Naive thymus-derived CD8-positive, alpha-beta T cell (primary cell): ENCODE measurements at regions of chr11 and their contacts with region 1.

Region 1: DNA sequence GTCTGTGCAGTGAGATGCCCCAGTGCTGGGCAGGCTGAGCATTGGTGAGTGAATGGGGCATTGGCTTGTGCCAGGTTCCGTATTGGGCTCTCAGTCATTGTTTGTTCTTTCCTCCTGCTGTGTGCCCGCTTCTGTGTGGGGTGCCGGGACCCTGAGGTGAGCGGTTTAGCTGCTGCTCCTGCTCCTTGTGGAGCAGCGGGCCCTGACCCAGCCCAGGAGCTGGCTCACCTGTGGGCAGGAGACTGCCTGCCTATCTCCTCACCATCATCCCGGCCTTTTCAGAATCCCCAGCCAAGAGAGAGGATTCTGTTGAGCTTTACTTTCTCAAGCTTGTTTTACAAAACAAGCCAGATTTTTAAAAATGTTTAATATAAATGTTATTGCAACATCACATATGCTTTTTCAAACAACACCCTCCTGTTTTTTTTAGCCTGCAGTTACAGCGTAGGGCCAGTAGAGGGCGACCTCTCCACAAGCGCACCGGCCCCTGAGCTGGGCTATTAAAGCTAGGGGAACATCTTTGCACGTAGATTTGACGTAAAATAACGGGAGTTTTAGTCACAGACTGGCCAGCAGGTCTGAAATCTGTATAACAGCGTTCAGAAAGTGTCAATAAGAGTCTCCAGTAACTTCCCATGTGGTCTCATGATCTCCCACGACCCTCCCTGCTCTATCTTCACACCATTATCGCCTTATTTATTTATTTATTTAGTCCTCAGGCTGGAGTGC is 25.1 kb upstream of the RELT start:
- DNase-seq: peak; percentile 37 to 81 (median 70)
- ATAC-seq: peak; percentile 88 to 90
- H3K4me3 Mint-ChIP-seq: no peak overlapping the region
- H3K27ac Mint-ChIP-seq: peak overlapping the region; percentile 19 to 89 (median 55)
- H3K4me1 Mint-ChIP-seq: peaks cover 0 to 13% (median 1%) of the 10 kb centered on the region in 4 donors
- H3K27me3 Mint-ChIP-seq: peaks cover 0 to 3% (median 0%) of the 10 kb centered on the region in 5 donors

Region 2: DNA sequence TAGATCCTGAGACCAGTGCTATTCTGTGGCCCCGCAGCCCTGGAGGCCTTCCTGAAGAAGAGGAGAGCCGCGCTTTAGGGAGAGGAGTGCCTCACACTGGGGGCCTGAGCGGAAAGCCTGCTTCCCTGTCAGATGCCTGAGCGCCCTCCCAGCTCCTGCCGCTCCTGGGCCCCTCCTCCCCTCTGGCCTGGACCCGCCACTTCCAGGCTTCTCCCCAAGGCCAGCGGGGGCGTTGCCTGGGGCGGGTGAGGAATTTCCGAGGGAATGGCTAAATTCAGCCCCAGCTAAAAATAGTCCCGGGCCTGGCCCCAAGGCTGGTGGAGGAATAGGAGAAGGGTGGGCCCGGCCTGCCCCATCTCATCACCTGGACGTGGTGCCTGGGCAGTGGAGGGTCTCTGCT is 27.6 kb before region 1 on chr11:
- POLR2A ChIA-PET with region 1: no interaction called
- DNase-seq: no peak
- ATAC-seq: no peak
- H3K4me3 Mint-ChIP-seq: no peak overlapping the region
- H3K27ac Mint-ChIP-seq: no peak overlapping the region
- H3K4me1 Mint-ChIP-seq: peaks cover 5 to 11% (median 11%) of the 10 kb centered on the region in 4 donors
- H3K27me3 Mint-ChIP-seq: no peaks in the 10 kb centered on the region

Region 3: DNA sequence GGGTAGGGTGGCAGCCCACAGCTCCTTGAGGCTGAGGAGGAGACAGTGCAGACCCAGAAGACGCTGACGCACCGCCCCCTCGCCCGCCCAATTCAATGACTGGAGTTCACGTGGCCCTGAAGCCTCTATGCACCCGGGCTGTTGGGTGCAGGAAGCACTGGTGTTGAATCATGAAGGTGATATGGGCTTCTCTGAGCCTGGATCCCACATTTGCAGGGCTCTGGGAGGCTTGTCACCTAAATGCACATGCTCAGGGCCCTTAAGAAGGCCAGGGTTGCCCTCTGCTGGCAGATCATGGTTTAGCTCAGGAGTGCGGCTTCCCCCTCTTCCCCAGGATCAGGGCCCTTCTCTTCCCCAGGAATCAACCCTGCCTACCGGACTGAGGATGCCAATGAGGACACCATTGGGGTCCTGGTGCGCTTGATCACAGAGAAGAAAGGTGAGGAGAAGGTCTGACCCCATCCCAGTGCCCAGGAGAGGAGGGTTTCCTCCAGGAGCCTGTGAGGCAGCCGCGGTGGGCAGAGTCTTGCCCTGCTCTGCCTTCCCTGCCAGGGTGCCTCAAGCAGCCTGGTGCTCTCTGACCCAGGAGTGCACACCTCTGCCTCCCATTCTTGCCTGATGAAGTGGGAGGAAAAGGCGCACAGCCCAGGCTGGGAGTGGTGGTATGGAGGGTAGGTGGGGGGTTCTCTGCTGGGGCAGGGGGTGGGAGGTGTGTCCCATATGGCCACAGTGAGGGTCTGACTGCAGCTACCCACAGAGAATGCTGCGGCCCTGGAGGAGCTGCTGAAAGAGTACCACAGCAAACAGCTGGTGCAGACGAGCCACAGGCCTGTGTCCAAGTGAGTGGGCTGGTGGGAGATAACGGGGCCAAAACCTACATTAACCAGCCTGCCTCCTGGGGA is 42.7 kb after region 1 on chr11:
- POLR2A ChIA-PET with region 1: interaction called, 18 read pairs
- DNase-seq: peak; percentile 45 to 78 (median 66)
- ATAC-seq: peak; percentile 72 to 84
- H3K4me3 Mint-ChIP-seq: no peak overlapping the region
- H3K27ac Mint-ChIP-seq: peak overlapping the region in 5 of 10 donors; percentile 52 to 85 (median 65)
- H3K4me1 Mint-ChIP-seq: peaks cover 6 to 15% (median 9%) of the 10 kb centered on the region in 4 donors
- H3K27me3 Mint-ChIP-seq: no peaks in the 10 kb centered on the region